ENCODE measurements at regions of chr11 and their contacts with region 1.

Region 1: DNA sequence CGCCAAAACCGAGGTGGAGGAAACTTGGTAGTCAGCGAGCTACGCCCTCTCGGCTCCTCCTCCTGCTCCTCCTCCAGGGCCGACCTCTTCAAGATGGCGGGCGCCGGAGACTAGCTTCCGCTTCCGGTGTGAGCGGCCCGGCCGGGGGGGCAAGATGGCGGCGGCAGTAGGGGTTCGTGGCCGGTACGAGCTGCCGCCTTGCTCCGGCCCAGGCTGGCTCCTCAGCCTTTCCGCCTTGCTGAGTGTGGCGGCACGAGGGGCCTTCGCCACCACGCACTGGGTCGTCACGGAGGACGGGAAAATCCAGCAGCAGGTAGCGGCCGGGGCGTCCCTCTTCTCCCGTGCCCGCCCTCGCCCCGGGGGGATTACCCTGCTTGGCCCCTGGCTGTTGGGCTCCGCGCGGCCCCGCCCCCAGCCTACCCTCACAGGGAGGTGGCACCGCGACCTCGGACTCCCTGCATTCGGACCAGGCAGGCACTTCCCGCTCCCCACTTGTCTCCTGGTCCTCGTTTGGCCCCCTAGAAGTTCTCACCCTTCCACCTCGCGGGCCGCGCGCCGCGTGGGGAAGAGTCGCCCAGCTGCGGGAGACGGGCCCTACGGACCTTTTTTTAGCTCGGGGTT is at the start of gene TTC17:
- DNase-seq: peak; percentile 90 to 94
- H3K4me3 ChIP-seq: peak within 1 kb of the TSS; percentile 97
- H3K27ac ChIP-seq: peak within 1 kb of the TSS; percentile 76
- H3K4me1 ChIP-seq: peaks cover 24% of the 10 kb centered on the region
- H3K27me3 ChIP-seq: no peaks in the 10 kb centered on the region
- CTCF ChIP-seq: no peak
- total RNA-seq, gene TTC17: 71.4 and 81.0 TPM in 2 replicates

Region 2: GRCh38 chr11:43311791-43312607 is 46.9 kb before region 1 on chr11 and contains the start of gene API5:
- CTCF ChIA-PET with region 1: interaction called, 3 read pairs
- POLR2A ChIA-PET with region 1: interaction called, 6 read pairs
- intact Hi-C with region 1: loop called (anchors 5 kb)
- DNase-seq: peak; percentile 90 to 93
- H3K4me3 ChIP-seq: peak within 1 kb of the TSS; percentile 96
- H3K27ac ChIP-seq: peak within 1 kb of the TSS; percentile 63
- H3K4me1 ChIP-seq: peaks cover 22% of the 10 kb centered on the region
- H3K27me3 ChIP-seq: peaks cover 7% of the 10 kb centered on the region; the same call in 1 of the 2 replicates
- CTCF ChIP-seq: peak; percentile 83
- total RNA-seq, gene API5: 90.0 and 115 TPM in 2 replicates

Region 3: DNA sequence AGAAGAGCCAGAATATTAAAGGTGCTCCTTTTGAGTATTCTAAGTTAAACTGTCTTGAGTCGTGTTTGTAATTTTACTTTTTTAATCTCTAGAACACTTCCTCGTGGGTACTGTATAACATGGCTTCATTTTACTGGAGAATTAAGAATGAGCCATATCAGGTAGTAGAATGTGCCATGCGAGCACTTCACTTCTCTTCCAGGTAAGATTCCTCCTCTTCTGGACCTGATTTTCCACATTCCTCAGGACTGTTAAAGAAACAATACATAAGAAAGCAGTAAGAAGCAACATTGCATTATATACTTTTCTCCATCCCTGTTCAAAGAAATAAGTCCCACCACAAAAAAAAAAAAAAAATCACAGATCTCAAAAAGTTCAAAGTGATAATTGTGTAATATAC is 37.7 kb after region 1 on chr11:
- CTCF ChIA-PET with region 1: no interaction called
- POLR2A ChIA-PET with region 1: no interaction called
- intact Hi-C with region 1: loop called (anchors 2 kb)
- DNase-seq: peak in 1 of 2 experiments; percentile 71
- H3K4me3 ChIP-seq: no peak overlapping the region
- H3K27ac ChIP-seq: peak overlapping the region; percentile 9; the same call in 1 of the 2 replicates
- H3K4me1 ChIP-seq: peaks cover 6% of the 10 kb centered on the region; the same call in 1 of the 2 replicates
- H3K27me3 ChIP-seq: no peaks in the 10 kb centered on the region
- CTCF ChIP-seq: no peak

Region 4: DNA sequence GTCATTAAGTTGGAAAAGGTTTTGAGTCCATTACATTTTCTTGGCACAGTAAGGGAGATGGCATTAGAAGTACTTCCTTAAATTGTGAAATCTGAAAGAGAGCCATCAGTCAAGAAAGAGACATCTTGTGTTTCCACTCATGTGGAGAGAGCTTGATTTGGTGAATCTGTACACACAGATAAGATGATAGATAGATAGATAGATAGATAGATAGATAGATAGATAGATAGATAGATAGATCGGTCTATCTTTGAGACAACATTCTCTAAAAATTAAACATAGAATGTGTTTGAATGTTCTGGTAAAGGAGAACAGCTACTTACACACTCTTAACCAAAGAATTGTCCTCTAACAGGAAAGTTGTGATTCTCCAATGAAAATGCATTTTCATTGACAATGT is 76.0 kb after region 1 on chr11:
- CTCF ChIA-PET with region 1: no interaction called
- POLR2A ChIA-PET with region 1: no interaction called
- intact Hi-C with region 1: no loop called
- DNase-seq: no peak
- H3K4me3 ChIP-seq: no peak overlapping the region
- H3K27ac ChIP-seq: no peak overlapping the region
- H3K4me1 ChIP-seq: no peaks in the 10 kb centered on the region
- H3K27me3 ChIP-seq: no peaks in the 10 kb centered on the region
- CTCF ChIP-seq: no peak

Region 5: GRCh38 chr11:43447151-43447550 is 88.2 kb after region 1 on chr11:
- CTCF ChIA-PET with region 1: no interaction called
- POLR2A ChIA-PET with region 1: no interaction called
- intact Hi-C with region 1: no loop called
- DNase-seq: no peak
- H3K4me3 ChIP-seq: no peak overlapping the region
- H3K27ac ChIP-seq: no peak overlapping the region
- H3K4me1 ChIP-seq: no peaks in the 10 kb centered on the region
- H3K27me3 ChIP-seq: no peaks in the 10 kb centered on the region
- CTCF ChIP-seq: no peak

Region 6: GRCh38 chr11:43830928-43831440 is 472.1 kb after region 1 on chr11:
- CTCF ChIA-PET with region 1: no interaction called
- POLR2A ChIA-PET with region 1: no interaction called
- intact Hi-C with region 1: loop called (anchors 2 kb)
- DNase-seq: peak; percentile 75 to 99
- H3K4me3 ChIP-seq: peak overlapping the region; percentile 27; the same call in 1 of the 2 replicates
- H3K27ac ChIP-seq: peak overlapping the region; percentile 52
- H3K4me1 ChIP-seq: peaks cover 21% of the 10 kb centered on the region
- H3K27me3 ChIP-seq: no peaks in the 10 kb centered on the region
- CTCF ChIP-seq: no peak

Measured in PC-9 (cell line).